PC-3 (cell line): ENCODE measurements at regions of chr20 and their contacts with region 1.

Region 1: DNA sequence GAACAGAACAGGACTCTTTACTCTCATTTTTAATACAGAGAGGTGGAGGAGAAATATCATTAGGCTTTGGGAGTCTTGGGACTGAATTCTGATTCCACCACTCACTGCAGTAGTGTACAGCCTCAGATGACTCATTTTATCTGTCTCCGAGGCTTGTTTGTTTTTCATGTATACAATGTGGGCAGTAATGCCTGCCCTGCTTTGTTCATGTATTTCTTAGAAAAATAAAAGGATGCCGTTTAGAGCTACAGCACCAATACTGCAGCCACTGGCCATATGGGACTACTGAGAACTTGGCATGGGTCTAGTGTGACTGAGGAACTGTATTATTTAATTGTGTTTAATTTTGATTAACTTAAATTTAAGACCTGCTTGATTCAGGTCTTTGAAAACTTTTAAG is 41.2 kb upstream of the JAG1 start:
- DNase-seq: peak; percentile 85
- ATAC-seq: peak; percentile 61
- H3K4me3 ChIP-seq: no peak overlapping the region
- H3K27ac ChIP-seq: peak overlapping the region; percentile 48
- H3K4me1 ChIP-seq: peaks cover 55% of the 10 kb centered on the region
- H3K27me3 ChIP-seq: no peaks in the 10 kb centered on the region
- CTCF ChIP-seq: no peak

Region 2: DNA sequence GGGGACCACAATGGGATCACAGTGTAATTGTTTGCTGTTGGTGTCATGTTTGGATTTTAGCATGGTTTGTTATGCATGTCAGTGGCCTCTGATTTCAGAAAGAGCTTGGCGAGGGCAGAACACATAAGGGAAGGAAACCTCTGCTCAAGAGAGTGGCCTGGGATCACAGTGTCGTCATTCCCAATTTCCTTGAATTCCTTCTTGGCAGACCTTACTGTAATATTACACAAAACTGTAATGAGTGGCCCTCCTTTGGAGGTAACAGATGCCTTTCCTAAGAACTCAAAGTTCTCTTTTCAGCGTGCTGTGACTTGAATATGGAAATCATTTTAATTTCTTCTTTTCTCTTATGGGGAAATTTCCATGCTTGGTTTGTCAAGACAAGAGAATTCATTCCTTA is 88.1 kb before region 1 on chr20:
- CTCF ChIA-PET with region 1: no interaction called
- POLR2A ChIA-PET with region 1: no interaction called
- intact Hi-C with region 1: no loop called
- DNase-seq: no peak
- ATAC-seq: no peak
- H3K4me3 ChIP-seq: no peak overlapping the region
- H3K27ac ChIP-seq: no peak overlapping the region
- H3K4me1 ChIP-seq: no peaks in the 10 kb centered on the region
- H3K27me3 ChIP-seq: no peaks in the 10 kb centered on the region
- CTCF ChIP-seq: no peak

Region 3: DNA sequence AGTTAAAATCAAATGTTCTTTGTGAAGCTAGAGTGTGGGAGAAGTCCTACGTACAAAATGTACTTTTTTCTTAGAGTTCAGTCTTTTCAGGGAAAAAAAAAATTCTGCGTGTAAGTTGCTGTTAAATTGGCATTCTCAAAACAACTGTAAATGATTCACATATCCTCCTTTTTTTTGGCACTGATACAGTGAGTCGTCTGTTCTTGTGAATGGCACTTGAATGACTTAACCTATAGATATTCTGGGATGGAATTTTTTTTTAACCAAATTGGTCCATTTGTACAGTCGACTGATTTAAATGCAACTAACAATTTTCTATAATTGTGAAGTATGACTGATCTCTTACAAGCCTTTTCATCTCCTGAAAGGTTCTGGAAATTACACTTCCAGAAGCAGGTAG is 35.8 kb before region 1 on chr20:
- CTCF ChIA-PET with region 1: no interaction called
- POLR2A ChIA-PET with region 1: interaction called, 13 read pairs
- intact Hi-C with region 1: loop called (anchors 1 kb)
- DNase-seq: peak; percentile 93
- ATAC-seq: peak; percentile 17
- H3K4me3 ChIP-seq: no peak overlapping the region
- H3K27ac ChIP-seq: peak overlapping the region; percentile 69
- H3K4me1 ChIP-seq: peaks cover 30% of the 10 kb centered on the region
- H3K27me3 ChIP-seq: no peaks in the 10 kb centered on the region
- CTCF ChIP-seq: no peak